ENCODE measurements at regions of chr3 and their contacts with region 1.

Region 1: DNA sequence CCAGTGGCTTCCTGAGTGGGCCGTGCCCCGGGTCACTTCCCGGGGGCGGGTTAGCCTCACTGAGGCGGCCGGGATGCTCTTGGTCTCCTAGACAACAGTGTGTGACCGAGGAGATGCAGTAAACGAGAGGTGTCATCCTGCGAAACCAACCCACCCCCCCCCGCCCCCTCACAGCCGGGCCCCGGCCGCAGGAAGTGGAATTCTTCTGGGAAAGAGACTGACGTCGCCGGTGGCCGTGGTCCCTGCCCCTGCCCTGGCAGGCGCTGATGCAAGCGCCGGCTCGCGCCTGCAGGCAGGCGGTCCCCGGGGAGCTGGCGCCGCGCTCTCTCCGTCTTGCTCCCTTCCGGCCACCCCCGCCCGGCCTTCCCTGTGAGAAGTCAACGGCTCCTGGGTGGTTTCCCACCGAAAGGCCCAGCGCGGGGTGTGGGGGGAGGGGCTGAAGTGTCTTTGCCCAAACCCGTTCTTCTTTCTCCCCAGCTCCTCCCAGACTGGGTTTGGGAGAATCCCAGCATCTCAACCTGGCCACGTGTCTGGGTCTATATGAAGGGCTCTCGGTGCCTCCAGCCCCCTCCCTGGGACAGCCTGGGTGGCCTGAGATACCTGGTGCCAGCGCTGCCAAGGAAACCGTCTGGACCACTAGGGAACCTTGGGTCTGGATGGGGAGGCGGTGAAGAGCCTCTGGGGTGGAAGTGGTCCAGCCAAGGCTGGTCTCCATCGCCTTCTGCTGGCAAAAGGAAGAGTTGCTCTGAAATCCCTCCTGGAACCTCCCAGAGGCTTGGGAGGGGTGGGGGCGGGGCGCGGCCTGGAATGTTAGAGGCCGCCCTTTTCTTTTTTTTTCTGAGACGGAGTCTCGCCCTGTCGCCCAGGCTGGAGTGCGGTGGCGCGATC is 47.3 kb downstream of the BHLHE40 start:
- DNase-seq: peak; percentile 41
- H3K4me3 Mint-ChIP-seq: peak overlapping the region; percentile 77
- H3K27ac Mint-ChIP-seq: peak overlapping the region; percentile 90
- H3K4me1 Mint-ChIP-seq: peaks cover 57% of the 10 kb centered on the region
- H3K27me3 Mint-ChIP-seq: no peaks in the 10 kb centered on the region

Region 2: GRCh38 chr3:4722103-4722502 is 304.5 kb before region 1 on chr3:
- intact Hi-C with region 1: loop called (anchors 2 kb)
- DNase-seq: peak; percentile 23
- H3K4me3 Mint-ChIP-seq: no peak overlapping the region
- H3K27ac Mint-ChIP-seq: peak overlapping the region; percentile 63
- H3K4me1 Mint-ChIP-seq: peaks cover 53% of the 10 kb centered on the region
- H3K27me3 Mint-ChIP-seq: no peaks in the 10 kb centered on the region

Region 3: DNA sequence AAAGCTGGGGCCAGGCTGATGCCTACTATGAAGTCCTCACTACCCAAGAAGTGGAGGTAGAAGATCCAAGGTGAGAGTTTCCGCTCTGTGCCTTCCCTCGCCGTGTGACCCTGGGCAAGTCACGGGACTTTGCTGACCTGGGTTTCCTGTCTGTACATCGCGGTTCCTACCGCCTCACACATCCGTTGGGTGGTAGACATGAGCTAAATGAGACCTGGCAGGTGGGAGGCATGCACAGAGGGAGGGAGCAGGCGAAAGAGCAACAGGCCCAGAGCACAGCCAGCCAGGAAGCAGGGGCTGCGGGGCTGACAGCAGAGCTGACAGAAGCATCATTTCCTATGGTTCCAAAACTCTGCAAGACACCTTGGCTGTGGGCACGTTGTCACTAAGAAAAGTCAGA is 204.6 kb before region 1 on chr3:
- intact Hi-C with region 1: loop called (anchors 2 kb)
- DNase-seq: peak; percentile 77
- H3K4me3 Mint-ChIP-seq: peak overlapping the region; percentile 20
- H3K27ac Mint-ChIP-seq: peak overlapping the region; percentile 93
- H3K4me1 Mint-ChIP-seq: peaks cover 84% of the 10 kb centered on the region
- H3K27me3 Mint-ChIP-seq: no peaks in the 10 kb centered on the region

Region 4: GRCh38 chr3:4888913-4889846 is 137.4 kb before region 1 on chr3:
- intact Hi-C with region 1: loop called (anchors 2 kb)
- DNase-seq: peak; percentile 34
- H3K4me3 Mint-ChIP-seq: peak overlapping the region; percentile 17
- H3K27ac Mint-ChIP-seq: peak overlapping the region; percentile 91
- H3K4me1 Mint-ChIP-seq: peaks cover 58% of the 10 kb centered on the region
- H3K27me3 Mint-ChIP-seq: no peaks in the 10 kb centered on the region

Region 5: DNA sequence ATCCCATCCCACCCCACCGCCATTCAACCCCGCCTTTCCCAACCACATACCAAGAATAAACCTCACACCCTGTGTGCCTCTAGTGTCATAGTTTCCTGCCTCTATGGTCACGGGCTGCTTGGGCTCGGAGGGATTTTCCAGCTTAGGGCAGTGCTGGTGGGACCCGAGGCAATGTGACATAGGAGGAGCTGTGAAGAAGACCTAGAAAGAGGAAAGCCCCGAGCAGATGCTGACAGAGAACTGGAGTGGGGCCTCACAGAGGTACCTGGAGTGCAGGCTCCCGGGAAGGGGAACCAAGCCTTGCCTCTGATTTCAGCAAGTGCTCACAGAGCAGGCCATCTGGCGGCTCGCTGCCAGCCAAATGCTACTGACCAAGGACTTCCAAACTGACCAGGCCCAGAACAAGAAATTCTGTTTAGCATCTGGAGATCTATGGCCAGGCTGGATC is 19.8 kb before region 1 on chr3:
- intact Hi-C with region 1: loop called (anchors 1 kb)
- DNase-seq: peak; percentile 72
- H3K4me3 Mint-ChIP-seq: peak overlapping the region; percentile 37
- H3K27ac Mint-ChIP-seq: peak overlapping the region; percentile 76
- H3K4me1 Mint-ChIP-seq: peaks cover 48% of the 10 kb centered on the region
- H3K27me3 Mint-ChIP-seq: no peaks in the 10 kb centered on the region

Region 6: GRCh38 chr3:5047764-5048163 is 21.2 kb after region 1 on chr3:
- intact Hi-C with region 1: no loop called
- DNase-seq: no peak
- H3K4me3 Mint-ChIP-seq: no peak overlapping the region
- H3K27ac Mint-ChIP-seq: no peak overlapping the region
- H3K4me1 Mint-ChIP-seq: peaks cover 15% of the 10 kb centered on the region
- H3K27me3 Mint-ChIP-seq: no peaks in the 10 kb centered on the region

Region 7: DNA sequence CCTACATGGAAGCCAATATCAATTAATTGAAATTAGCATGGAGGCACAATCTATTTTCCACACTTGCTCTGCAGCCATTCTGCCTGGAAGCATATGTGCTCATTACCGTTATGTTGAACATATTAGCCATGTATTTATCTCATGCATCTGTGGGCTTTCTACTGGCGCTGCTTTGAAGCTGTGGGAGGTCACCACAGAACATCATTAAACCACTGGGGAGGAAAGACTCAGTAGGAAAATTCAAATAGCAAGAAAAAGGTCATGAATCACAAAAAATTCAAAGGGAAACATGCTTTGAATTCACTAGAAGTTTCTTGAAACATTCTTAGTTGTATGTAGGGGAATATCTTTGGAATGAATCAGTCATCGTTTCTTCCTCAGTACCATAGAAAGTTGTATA is 813.5 kb after region 1 on chr3:
- intact Hi-C with region 1: no loop called
- DNase-seq: no peak
- H3K4me3 Mint-ChIP-seq: no peak overlapping the region
- H3K27ac Mint-ChIP-seq: no peak overlapping the region
- H3K4me1 Mint-ChIP-seq: no peaks in the 10 kb centered on the region
- H3K27me3 Mint-ChIP-seq: no peaks in the 10 kb centered on the region